ENCODE measurements at regions of chr19 and their contacts with region 1.

Region 1: DNA sequence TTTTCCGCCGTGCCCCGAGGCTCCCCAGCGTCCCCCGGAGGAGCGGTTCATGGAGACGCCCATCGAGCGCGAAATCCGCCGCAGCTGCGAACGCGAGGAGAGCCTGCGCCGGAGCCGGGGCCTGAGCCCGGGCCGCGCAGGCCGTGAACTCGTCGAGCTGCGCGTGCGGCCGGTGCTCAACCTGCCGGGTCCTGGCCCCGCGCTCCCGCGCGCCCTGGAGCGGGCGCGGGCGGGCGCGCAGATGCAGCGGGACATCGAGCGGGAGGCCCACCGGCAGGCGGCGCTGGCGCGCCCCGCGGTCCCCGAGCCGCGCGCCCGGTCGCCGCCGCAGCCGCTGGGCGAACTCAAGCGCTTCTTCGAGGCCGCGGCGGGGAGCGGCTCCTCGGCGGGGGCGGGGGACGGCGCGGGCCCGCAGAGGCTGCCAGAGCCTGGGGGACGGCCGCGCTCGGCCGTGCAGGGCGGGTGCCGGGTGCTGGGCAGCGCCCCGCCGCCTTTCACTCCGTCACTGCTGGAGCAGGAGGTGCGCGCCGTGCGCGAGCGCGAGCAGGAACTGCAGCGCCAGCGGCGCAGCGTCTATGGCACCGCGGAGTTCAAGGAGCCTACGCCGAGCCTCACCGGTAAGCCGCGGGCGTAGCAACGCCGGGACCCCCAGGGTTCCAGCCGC is 807 bp downstream of the MISP3 start:
- DNase-seq: peak; percentile 92
- ATAC-seq: peak; percentile 64
- H3K4me3 ChIP-seq: peak overlapping the region; percentile 47 to 79 (median 59)
- H3K4me3 Mint-ChIP-seq: peak overlapping the region; percentile 87
- H3K27ac ChIP-seq: no peak overlapping the region
- H3K27ac Mint-ChIP-seq: peak overlapping the region; percentile 34
- H3K4me1 ChIP-seq: peaks cover 31 to 35% of the 10 kb centered on the region in 2 donors
- H3K4me1 Mint-ChIP-seq: peaks cover 26% of the 10 kb centered on the region
- H3K27me3 ChIP-seq: peaks cover 0 to 18% (median 5%) of the 10 kb centered on the region in 4 experiments
- H3K27me3 Mint-ChIP-seq: peaks cover 5% of the 10 kb centered on the region
- CTCF ChIP-seq: peak; percentile 44

Region 2: GRCh38 chr19:13856497-13856896 is 216.9 kb before region 1 on chr19:
- CTCF ChIA-PET with region 1: no interaction called
- POLR2A ChIA-PET with region 1: no interaction called
- intact Hi-C with region 1: no loop called
- DNase-seq: no peak
- ATAC-seq: no peak
- H3K4me3 ChIP-seq: no peak overlapping the region
- H3K4me3 Mint-ChIP-seq: no peak overlapping the region
- H3K27ac ChIP-seq: no peak overlapping the region
- H3K27ac Mint-ChIP-seq: no peak overlapping the region
- H3K4me1 ChIP-seq: peaks cover 5% of the 10 kb centered on the region in 2 donors
- H3K4me1 Mint-ChIP-seq: peaks cover 9% of the 10 kb centered on the region
- H3K27me3 ChIP-seq: no peaks in the 10 kb centered on the region
- H3K27me3 Mint-ChIP-seq: no peaks in the 10 kb centered on the region
- CTCF ChIP-seq: no peak

Region 3: GRCh38 chr19:13887517-13887916 is 185.9 kb before region 1 on chr19:
- CTCF ChIA-PET with region 1: interaction called, 92 read pairs
- POLR2A ChIA-PET with region 1: no interaction called
- intact Hi-C with region 1: no loop called
- DNase-seq: no peak
- ATAC-seq: no peak
- H3K4me3 ChIP-seq: no peak overlapping the region
- H3K4me3 Mint-ChIP-seq: no peak overlapping the region
- H3K27ac ChIP-seq: no peak overlapping the region
- H3K27ac Mint-ChIP-seq: no peak overlapping the region
- H3K4me1 ChIP-seq: peaks cover 2 to 5% of the 10 kb centered on the region in 2 donors
- H3K4me1 Mint-ChIP-seq: no peaks in the 10 kb centered on the region
- H3K27me3 ChIP-seq: peaks cover 0 to 9% (median 0%) of the 10 kb centered on the region in 4 experiments
- H3K27me3 Mint-ChIP-seq: no peaks in the 10 kb centered on the region
- CTCF ChIP-seq: no peak

Region 4: DNA sequence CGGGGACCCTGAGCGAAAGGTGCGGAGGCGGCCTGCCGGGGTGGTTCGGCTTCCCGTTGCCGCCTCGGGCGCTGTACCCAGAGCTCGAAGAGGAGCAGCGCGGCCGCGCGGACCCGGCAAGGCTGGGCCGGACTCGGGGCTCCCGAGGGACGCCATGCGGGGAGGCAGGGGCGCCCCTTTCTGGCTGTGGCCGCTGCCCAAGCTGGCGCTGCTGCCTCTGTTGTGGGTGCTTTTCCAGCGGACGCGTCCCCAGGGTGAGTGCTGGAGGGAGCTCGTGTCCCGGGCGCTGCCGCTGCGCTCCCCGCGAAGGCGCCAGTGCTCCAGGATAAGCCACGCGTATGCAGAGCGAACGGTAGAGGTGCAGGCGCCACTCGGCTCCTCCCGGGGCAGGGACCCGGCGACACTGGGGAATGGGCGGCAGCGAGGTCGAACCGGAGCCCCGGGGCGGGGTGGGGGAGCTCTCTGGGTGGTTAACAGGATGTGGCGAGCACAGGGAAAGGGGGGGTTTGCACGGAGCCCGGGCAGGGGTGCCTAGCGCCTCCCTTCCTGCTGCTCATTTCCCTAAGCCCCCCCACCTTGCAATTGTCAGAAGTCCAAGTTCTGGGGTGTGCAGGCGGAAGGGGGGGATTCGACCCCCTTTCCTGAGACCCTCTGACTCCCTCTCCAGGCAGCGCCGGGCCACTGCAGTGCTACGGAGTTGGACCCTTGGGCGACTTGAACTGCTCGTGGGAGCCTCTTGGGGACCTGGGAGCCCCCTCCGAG is 41.5 kb before region 1 on chr19 and contains the start of gene IL27RA:
- CTCF ChIA-PET with region 1: interaction called, 12 read pairs
- POLR2A ChIA-PET with region 1: no interaction called
- intact Hi-C with region 1: no loop called
- DNase-seq: peak; percentile 84
- ATAC-seq: peak; percentile 72
- H3K4me3 ChIP-seq: peak within 1 kb of the TSS; percentile 26 to 95 (median 83)
- H3K4me3 Mint-ChIP-seq: peak within 1 kb of the TSS; percentile 94
- H3K27ac ChIP-seq: peak within 1 kb of the TSS; percentile 83 to 94
- H3K27ac Mint-ChIP-seq: peak within 1 kb of the TSS; percentile 94
- H3K4me1 ChIP-seq: peaks cover 22 to 42% of the 10 kb centered on the region in 2 donors
- H3K4me1 Mint-ChIP-seq: peaks cover 38% of the 10 kb centered on the region
- H3K27me3 ChIP-seq: no peaks in the 10 kb centered on the region
- H3K27me3 Mint-ChIP-seq: no peaks in the 10 kb centered on the region
- CTCF ChIP-seq: peak; percentile 68
- total RNA-seq, gene IL27RA: 38.2 and 38.6 TPM in 2 replicates

Region 5: GRCh38 chr19:14059093-14059480 is 14.3 kb before region 1 on chr19:
- CTCF ChIA-PET with region 1: interaction called, 43 read pairs
- POLR2A ChIA-PET with region 1: no interaction called
- intact Hi-C with region 1: loop called (anchors 2 kb)
- DNase-seq: peak; percentile 68
- ATAC-seq: no peak
- H3K4me3 ChIP-seq: no peak overlapping the region
- H3K4me3 Mint-ChIP-seq: no peak overlapping the region
- H3K27ac ChIP-seq: no peak overlapping the region
- H3K27ac Mint-ChIP-seq: no peak overlapping the region
- H3K4me1 ChIP-seq: peaks cover 18 to 22% of the 10 kb centered on the region in 2 donors
- H3K4me1 Mint-ChIP-seq: peaks cover 18% of the 10 kb centered on the region
- H3K27me3 ChIP-seq: peaks cover 0 to 54% (median 28%) of the 10 kb centered on the region in 4 experiments
- H3K27me3 Mint-ChIP-seq: peaks cover 37% of the 10 kb centered on the region
- CTCF ChIP-seq: peak; percentile 81

Region 6: GRCh38 chr19:14106840-14107239 is 33.4 kb after region 1 on chr19:
- CTCF ChIA-PET with region 1: no interaction called
- POLR2A ChIA-PET with region 1: no interaction called
- intact Hi-C with region 1: no loop called
- DNase-seq: no peak
- ATAC-seq: no peak
- H3K4me3 ChIP-seq: no peak overlapping the region
- H3K4me3 Mint-ChIP-seq: no peak overlapping the region
- H3K27ac ChIP-seq: no peak overlapping the region
- H3K27ac Mint-ChIP-seq: no peak overlapping the region
- H3K4me1 ChIP-seq: no peaks in the 10 kb centered on the region
- H3K4me1 Mint-ChIP-seq: no peaks in the 10 kb centered on the region
- H3K27me3 ChIP-seq: no peaks in the 10 kb centered on the region
- H3K27me3 Mint-ChIP-seq: no peaks in the 10 kb centered on the region
- CTCF ChIP-seq: no peak

Region 7: GRCh38 chr19:14117668-14118164 is 44.3 kb after region 1 on chr19 and contains the start of gene PRKACA:
- CTCF ChIA-PET with region 1: interaction called, 14 read pairs
- POLR2A ChIA-PET with region 1: interaction called, 8 read pairs
- intact Hi-C with region 1: no loop called
- DNase-seq: peak; percentile 98
- ATAC-seq: peak; percentile 93
- H3K4me3 ChIP-seq: peak within 1 kb of the TSS; percentile 54 to 74 (median 66)
- H3K4me3 Mint-ChIP-seq: peak within 1 kb of the TSS; percentile 94
- H3K27ac ChIP-seq: peak within 1 kb of the TSS; percentile 24 to 77
- H3K27ac Mint-ChIP-seq: peak within 1 kb of the TSS; percentile 87
- H3K4me1 ChIP-seq: peaks cover 36 to 38% of the 10 kb centered on the region in 2 donors
- H3K4me1 Mint-ChIP-seq: peaks cover 39% of the 10 kb centered on the region
- H3K27me3 ChIP-seq: no peaks in the 10 kb centered on the region
- H3K27me3 Mint-ChIP-seq: no peaks in the 10 kb centered on the region
- CTCF ChIP-seq: no peak
- total RNA-seq, gene PRKACA: 43.0 and 48.8 TPM in 2 replicates

Region 8: GRCh38 chr19:14160017-14160703 is 86.8 kb after region 1 on chr19:
- CTCF ChIA-PET with region 1: no interaction called
- POLR2A ChIA-PET with region 1: no interaction called
- intact Hi-C with region 1: no loop called
- DNase-seq: no peak
- ATAC-seq: no peak
- H3K4me3 ChIP-seq: no peak overlapping the region
- H3K4me3 Mint-ChIP-seq: no peak overlapping the region
- H3K27ac ChIP-seq: no peak overlapping the region
- H3K27ac Mint-ChIP-seq: no peak overlapping the region
- H3K4me1 ChIP-seq: no peaks in the 10 kb centered on the region
- H3K4me1 Mint-ChIP-seq: no peaks in the 10 kb centered on the region
- H3K27me3 ChIP-seq: peaks cover 0 to 8% (median 0%) of the 10 kb centered on the region in 4 experiments
- H3K27me3 Mint-ChIP-seq: no peaks in the 10 kb centered on the region
- CTCF ChIP-seq: no peak